WTC11 (cell line): ENCODE measurements at regions of chr6 and their contacts with region 1.

Region 1: GRCh38 chr6:166381733-166382499 is 824 bp downstream of the MPC1 start:
- DNase-seq: peak; percentile 87
- ATAC-seq: peak; percentile 50
- H3K4me3 Mint-ChIP-seq: peak overlapping the region; percentile 79
- H3K27ac Mint-ChIP-seq: peak overlapping the region; percentile 36; the same call in 1 of the 2 replicates
- H3K4me1 Mint-ChIP-seq: peaks cover 8% of the 10 kb centered on the region
- H3K27me3 Mint-ChIP-seq: no peaks in the 10 kb centered on the region; the same call in 1 of the 2 replicates
- CTCF ChIP-seq: peak; percentile 81

Region 2: GRCh38 chr6:166275714-166276166 is 106.2 kb before region 1 on chr6:
- CTCF ChIA-PET with region 1: interaction called, 10 read pairs
- POLR2A ChIA-PET with region 1: interaction called, 3 read pairs
- DNase-seq: peak; percentile 79
- ATAC-seq: peak; percentile 89
- H3K4me3 Mint-ChIP-seq: no peak overlapping the region
- H3K27ac Mint-ChIP-seq: no peak overlapping the region
- H3K4me1 Mint-ChIP-seq: no peaks in the 10 kb centered on the region
- H3K27me3 Mint-ChIP-seq: peaks cover 25% of the 10 kb centered on the region
- CTCF ChIP-seq: peak; percentile 96

Region 3: GRCh38 chr6:166308033-166308768 is 73.7 kb before region 1 on chr6 and contains the start of gene PRR18:
- CTCF ChIA-PET with region 1: interaction called, 27 read pairs
- POLR2A ChIA-PET with region 1: no interaction called
- DNase-seq: peak; percentile 42
- ATAC-seq: peak; percentile 40
- H3K4me3 Mint-ChIP-seq: peak within 1 kb of the TSS; percentile 56
- H3K27ac Mint-ChIP-seq: no peak within 1 kb of the TSS
- H3K4me1 Mint-ChIP-seq: peaks cover 8% of the 10 kb centered on the region
- H3K27me3 Mint-ChIP-seq: peaks cover 61% of the 10 kb centered on the region
- CTCF ChIP-seq: no peak
- total RNA-seq, gene PRR18: 0.16 to 0.52 TPM (median 0.39 TPM) in 3 replicates

Region 4: GRCh38 chr6:166313255-166314070 is 68.5 kb before region 1 on chr6:
- CTCF ChIA-PET with region 1: interaction called, 27 read pairs
- POLR2A ChIA-PET with region 1: no interaction called
- DNase-seq: peak; percentile 67
- ATAC-seq: peak; percentile 80
- H3K4me3 Mint-ChIP-seq: no peak overlapping the region
- H3K27ac Mint-ChIP-seq: no peak overlapping the region
- H3K4me1 Mint-ChIP-seq: peaks cover 18% of the 10 kb centered on the region
- H3K27me3 Mint-ChIP-seq: peaks cover 25% of the 10 kb centered on the region
- CTCF ChIP-seq: peak; percentile 37; the same call in 1 of the 2 replicates

Region 5: DNA sequence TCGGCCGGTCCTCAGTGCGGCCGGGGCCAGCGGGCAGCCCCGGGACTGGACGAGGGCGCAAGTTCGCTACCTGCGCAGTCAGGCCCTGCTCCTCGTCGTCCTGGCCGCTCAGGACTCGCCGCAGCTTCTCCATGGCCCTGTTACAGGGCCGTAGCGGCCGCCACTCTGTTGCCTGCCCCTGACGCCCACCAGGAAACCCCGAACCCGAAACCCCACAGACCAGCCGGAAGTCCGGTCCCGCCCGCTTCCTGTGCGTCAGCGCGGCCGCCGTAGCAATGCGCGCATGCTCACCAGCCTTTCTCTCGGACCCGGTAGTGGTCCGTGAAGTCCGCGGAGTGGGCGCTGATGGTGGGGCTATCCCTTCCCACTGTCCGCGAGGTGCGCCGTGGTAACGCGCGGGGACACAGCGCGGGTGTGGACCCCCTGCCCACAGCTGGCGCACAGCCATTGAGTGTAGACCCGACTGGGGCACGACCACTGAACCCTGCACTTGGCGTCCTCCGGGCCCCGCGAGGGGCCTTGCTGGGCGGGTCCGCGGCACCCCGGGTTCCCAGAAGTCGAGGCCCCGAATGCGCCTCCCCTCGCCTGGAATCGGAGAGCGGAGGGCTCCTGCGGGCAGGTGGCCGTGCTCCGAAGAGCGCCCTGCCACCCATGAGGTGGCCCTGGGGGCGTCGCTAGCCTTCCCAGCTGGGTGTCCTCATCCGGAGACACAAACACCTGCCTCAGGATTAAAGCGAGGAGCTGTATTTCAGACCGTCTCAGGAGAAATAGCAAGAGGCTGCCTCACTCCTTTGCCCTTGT is 39.4 kb before region 1 on chr6 and contains the start of gene SFT2D1:
- CTCF ChIA-PET with region 1: interaction called, 10 read pairs
- POLR2A ChIA-PET with region 1: no interaction called
- DNase-seq: peak; percentile 77
- ATAC-seq: peak; percentile 87
- H3K4me3 Mint-ChIP-seq: peak within 1 kb of the TSS; percentile 84
- H3K27ac Mint-ChIP-seq: peak within 1 kb of the TSS; percentile 86
- H3K4me1 Mint-ChIP-seq: peaks cover 15% of the 10 kb centered on the region
- H3K27me3 Mint-ChIP-seq: peaks cover 3% of the 10 kb centered on the region; the same call in 1 of the 2 replicates
- CTCF ChIP-seq: no peak
- total RNA-seq, gene SFT2D1: 48.0 to 53.1 TPM (median 49.4 TPM) in 3 replicates

Region 6: GRCh38 chr6:166365221-166365620 is 16.7 kb before region 1 on chr6:
- CTCF ChIA-PET with region 1: interaction called, 13 read pairs
- POLR2A ChIA-PET with region 1: no interaction called
- DNase-seq: no peak
- ATAC-seq: peak; percentile 38; the same call in 1 of the 2 replicates
- H3K4me3 Mint-ChIP-seq: peak overlapping the region; percentile 61
- H3K27ac Mint-ChIP-seq: peak overlapping the region; percentile 99
- H3K4me1 Mint-ChIP-seq: peaks cover 67% of the 10 kb centered on the region
- H3K27me3 Mint-ChIP-seq: no peaks in the 10 kb centered on the region
- CTCF ChIP-seq: no peak

Region 7: DNA sequence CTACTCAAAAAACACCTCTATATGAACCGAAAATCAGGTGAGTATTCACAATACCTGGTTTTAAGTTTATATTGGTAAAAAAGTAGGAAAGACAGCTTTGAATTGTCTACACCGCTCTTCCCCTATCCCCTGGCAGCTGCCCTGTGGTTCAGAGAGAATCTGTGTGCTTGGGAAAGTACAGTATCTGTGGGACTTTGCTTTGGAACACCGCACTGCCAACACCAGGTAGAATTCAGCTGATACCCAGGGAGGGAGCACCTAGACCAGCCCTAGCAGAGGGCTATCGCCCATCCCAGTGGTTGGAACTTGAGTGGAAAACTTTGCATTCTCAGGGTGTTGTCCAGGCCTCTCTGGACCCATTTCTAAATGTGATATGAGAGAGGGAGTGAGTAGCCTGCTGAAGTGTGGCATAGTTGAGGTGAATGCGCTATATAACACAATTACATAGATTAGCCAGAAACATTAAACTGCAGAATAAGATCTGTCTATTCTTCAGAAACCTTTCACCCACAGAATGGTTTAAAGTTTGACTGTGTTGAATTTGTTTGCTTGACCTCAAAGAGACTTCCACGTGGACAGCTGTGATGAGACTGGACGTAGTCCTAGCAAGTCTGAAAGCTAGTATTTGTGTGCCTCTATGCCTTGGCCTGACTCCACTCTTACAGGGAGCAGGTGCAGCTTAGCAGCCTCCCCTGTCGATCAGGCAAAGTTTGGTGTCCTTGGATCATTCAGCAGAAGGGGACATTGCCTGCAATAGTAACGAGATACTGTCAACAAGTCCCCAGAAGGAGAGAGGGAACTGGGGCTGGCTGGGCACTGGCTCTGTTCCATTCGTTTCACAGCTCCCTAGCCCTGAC is 12.3 kb after region 1 on chr6:
- CTCF ChIA-PET with region 1: interaction called, 19 read pairs
- POLR2A ChIA-PET with region 1: interaction called, 5 read pairs
- DNase-seq: no peak
- ATAC-seq: no peak
- H3K4me3 Mint-ChIP-seq: no peak overlapping the region
- H3K27ac Mint-ChIP-seq: no peak overlapping the region
- H3K4me1 Mint-ChIP-seq: peaks cover 13% of the 10 kb centered on the region
- H3K27me3 Mint-ChIP-seq: peaks cover 5% of the 10 kb centered on the region
- CTCF ChIP-seq: no peak

Region 8: DNA sequence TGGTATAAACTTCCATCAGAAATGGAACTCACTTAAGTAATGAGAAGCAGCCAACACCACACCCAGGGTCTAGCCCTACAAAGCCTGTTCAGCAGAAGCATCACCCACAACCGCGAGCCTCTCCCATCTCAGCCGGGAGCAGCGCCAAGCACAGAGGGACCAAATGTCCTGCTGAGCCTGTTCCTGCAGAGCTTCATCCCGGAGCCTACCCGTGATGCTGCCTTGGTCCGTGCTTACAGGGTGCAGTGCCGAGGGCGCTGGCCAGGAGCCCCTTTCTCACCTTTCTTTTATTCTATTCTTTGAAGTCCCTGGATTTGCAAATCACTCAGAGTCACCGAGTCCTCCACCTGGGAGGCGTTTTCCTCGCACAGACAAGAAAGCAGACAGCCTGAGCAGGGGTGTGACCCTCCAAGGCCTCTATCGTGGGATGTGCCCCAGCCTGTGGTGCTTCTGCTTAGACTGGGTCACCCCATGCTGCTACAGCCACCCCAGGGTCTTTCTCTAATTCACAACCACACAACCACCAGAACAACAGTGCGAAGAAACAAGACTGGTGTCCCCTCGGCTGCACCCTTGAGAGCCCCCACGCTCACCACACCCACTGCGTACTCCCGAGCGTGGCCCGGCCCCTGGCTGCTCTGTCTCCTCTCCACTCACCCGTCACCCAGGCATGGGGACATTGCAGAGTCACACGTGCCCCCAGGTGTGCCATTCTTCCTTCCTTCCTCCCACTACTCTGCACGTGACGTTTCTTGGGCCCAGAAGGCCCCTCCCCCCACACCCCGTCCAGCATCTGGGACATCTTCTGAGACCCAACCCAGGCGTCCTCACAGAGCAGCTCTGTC is 93.0 kb after region 1 on chr6:
- CTCF ChIA-PET with region 1: no interaction called
- POLR2A ChIA-PET with region 1: no interaction called
- DNase-seq: no peak
- ATAC-seq: no peak
- H3K4me3 Mint-ChIP-seq: no peak overlapping the region
- H3K27ac Mint-ChIP-seq: no peak overlapping the region
- H3K4me1 Mint-ChIP-seq: 0 out of 2 replicates have a peak, but pooled peaks cover 4% of the 10 kb centered on the region
- H3K27me3 Mint-ChIP-seq: no peaks in the 10 kb centered on the region
- CTCF ChIP-seq: no peak